Ascending aorta (tissue), 2 donors: ENCODE measurements at regions of chr4 and their contacts with region 1.

Region 1: DNA sequence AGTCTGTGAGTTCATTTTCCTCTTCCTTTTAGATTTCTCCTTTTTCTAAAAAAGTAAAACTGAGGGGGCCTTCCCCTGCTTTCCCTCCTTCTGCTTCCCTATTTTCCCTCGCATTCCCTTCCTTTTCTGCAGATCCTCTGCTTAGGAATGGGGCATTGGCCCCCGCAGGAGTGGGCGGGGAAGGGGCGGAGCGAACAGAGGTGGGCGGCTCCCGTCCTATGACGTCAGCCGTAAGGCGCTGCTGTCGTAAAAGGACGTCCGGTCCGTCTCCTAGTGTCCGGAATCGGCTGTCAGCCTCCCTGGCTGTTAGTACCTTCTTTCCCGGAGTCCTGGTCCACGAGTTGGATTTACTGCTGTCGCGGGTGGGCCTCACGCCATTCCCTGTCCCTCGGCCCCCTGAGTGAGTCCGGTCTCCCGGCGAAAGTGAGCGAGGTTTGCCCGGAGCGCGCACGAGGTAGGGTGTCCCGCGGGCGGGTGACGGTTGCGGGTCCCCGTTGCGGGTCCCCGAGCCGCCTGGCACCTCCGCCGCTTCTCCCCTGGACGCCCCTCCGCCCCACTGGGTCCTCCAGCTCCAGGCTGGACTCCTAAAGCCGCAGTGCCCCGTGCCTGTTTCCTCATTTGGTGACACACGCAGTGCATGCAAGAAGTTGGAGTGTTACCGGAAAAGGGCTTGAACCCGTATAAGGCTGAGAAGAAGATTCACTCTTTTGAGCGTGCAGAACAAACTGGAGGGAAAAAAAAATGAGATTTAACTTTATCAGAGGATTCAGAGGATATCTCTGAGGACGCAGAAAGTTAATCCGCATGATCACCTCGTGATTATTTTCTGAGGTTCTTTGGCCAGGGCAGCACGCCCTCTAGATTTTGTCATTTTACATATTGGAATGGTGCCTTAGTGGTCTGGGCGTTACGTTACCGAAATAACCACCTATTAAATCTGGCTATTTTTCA is at the start of gene ZNF330:
- DNase-seq: peak; percentile 36 to 96
- H3K4me3 ChIP-seq: peak within 1 kb of the TSS; percentile 79 to 96
- H3K27ac ChIP-seq: peak within 1 kb of the TSS; percentile 94 to 98
- H3K4me1 ChIP-seq: peaks cover 4 to 5% of the 10 kb centered on the region in 2 donors
- H3K27me3 ChIP-seq: no peaks in the 10 kb centered on the region
- CTCF ChIP-seq: peak in 1 of 3 experiments; percentile 37
- total RNA-seq, gene ZNF330: 7.9 TPM

Region 2: GRCh38 chr4:139301113-139301820 is 1919.7 kb before region 1 on chr4 and contains the start of gene NAA15:
- intact Hi-C with region 1: loop called (anchors 5 kb)
- DNase-seq: peak; percentile 93 to 99
- H3K4me3 ChIP-seq: peak within 1 kb of the TSS; percentile 78 to 99
- H3K27ac ChIP-seq: peak within 1 kb of the TSS; percentile 92 to 95
- H3K4me1 ChIP-seq: peaks cover 3 to 34% of the 10 kb centered on the region in 2 donors
- H3K27me3 ChIP-seq: no peaks in the 10 kb centered on the region
- CTCF ChIP-seq: no peak
- total RNA-seq, gene NAA15: 6.4 TPM

Region 3: GRCh38 chr4:140861359-140862176 is 359.4 kb before region 1 on chr4:
- intact Hi-C with region 1: loop called (anchors 5 kb)
- DNase-seq: peak in 1 of 2 donors; percentile 88
- H3K4me3 ChIP-seq: no peak overlapping the region
- H3K27ac ChIP-seq: no peak overlapping the region
- H3K4me1 ChIP-seq: no peaks in the 10 kb centered on the region
- H3K27me3 ChIP-seq: no peaks in the 10 kb centered on the region
- CTCF ChIP-seq: peak; percentile 63 to 82 (median 68)

Region 4: DNA sequence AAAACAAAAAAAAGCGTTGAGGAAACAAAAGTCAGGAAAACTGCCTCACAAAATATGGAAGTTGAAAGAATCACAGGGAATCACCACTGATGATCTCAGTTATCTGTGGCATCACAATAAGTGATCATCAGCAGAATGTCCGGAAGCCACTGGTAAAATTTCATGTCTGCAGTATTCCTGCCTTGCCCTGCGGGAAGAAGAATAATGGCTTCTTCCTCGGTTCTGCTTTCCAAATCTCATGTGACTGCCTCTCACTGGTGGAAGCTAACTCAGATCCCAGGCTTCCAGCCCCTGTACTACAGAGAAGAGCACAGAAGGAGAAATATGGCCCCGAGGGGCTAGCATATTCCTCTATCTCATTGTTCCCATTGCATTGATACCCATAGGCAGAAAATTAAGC is 13.0 kb before region 1 on chr4:
- intact Hi-C with region 1: no loop called
- DNase-seq: no peak
- H3K4me3 ChIP-seq: no peak overlapping the region
- H3K27ac ChIP-seq: no peak overlapping the region
- H3K4me1 ChIP-seq: no peaks in the 10 kb centered on the region
- H3K27me3 ChIP-seq: no peaks in the 10 kb centered on the region
- CTCF ChIP-seq: no peak

Region 5: GRCh38 chr4:141246243-141246642 is 25.3 kb after region 1 on chr4:
- intact Hi-C with region 1: no loop called
- DNase-seq: no peak
- H3K4me3 ChIP-seq: no peak overlapping the region
- H3K27ac ChIP-seq: no peak overlapping the region
- H3K4me1 ChIP-seq: no peaks in the 10 kb centered on the region
- H3K27me3 ChIP-seq: no peaks in the 10 kb centered on the region
- CTCF ChIP-seq: no peak

Region 6: DNA sequence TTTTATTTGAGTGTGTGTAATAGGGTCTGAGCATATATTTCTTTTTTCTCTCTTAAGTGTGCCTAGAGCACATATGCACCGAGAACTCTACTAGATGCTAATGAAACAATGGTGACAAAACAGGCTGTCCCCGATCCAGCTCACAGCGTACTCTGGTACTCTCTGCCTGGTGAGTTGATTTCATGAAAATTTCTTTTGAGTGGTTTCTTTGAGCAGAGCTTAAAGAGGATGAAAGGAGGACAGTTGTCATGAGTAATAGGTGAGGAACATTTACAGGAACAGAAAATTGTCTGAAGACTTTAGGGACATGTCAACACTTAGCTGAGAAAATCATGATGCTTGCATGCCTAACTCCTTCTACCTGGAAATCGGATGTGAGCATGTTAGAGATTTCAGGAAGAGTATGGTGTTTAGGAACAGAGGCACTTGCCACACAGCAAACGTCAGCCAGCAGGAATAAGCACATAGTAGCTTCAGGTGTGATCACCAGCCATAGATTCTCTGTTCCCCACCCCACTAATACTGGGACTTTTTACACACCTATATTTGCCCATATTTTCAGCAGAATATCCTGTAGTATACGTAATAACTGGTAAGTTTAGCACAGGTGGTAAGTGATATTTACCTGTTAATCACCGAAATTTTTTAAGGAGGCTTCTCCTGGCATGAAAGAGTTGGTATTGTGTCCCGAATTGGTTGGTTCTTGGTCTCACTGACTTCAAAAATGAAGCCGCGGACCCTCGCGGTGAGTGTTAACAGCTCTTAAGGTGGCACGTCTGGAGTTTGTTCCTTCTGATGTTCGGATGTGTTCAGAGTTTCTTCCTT is 110.8 kb after region 1 on chr4:
- intact Hi-C with region 1: loop called (anchors 5 kb)
- DNase-seq: no peak
- H3K4me3 ChIP-seq: peak overlapping the region in 1 of 2 donors; percentile 86
- H3K27ac ChIP-seq: peak overlapping the region in 1 of 2 donors; percentile 77
- H3K4me1 ChIP-seq: peaks cover 0 to 4% of the 10 kb centered on the region in 2 donors
- H3K27me3 ChIP-seq: no peaks in the 10 kb centered on the region
- CTCF ChIP-seq: no peak

Region 7: DNA sequence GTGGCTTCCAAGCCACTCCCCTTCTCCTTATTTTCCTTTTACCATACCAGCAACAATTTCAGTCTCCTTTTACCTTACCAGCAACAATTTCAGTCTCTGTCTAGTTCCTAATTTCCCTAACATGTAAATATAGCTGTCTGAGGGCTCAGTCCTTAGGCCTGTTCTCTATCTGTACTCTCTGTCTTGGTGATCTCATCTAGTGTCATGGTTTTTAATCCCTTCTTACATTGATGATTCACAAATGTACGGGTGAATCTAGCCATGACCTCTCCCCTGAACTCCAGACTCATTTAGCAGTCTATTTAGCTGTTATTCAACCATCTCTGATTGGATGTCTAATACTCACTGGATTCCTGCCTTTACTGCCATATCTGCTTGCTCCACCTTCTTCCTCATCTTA is 422.6 kb after region 1 on chr4:
- intact Hi-C with region 1: loop called (anchors 10 kb)
- DNase-seq: no peak
- H3K4me3 ChIP-seq: no peak overlapping the region
- H3K27ac ChIP-seq: peak overlapping the region in 1 of 2 donors; percentile 31
- H3K4me1 ChIP-seq: peaks cover 0 to 12% of the 10 kb centered on the region in 2 donors
- H3K27me3 ChIP-seq: no peaks in the 10 kb centered on the region
- CTCF ChIP-seq: no peak